ENCODE measurements at regions of chr19 and their contacts with region 1.

Region 1: DNA sequence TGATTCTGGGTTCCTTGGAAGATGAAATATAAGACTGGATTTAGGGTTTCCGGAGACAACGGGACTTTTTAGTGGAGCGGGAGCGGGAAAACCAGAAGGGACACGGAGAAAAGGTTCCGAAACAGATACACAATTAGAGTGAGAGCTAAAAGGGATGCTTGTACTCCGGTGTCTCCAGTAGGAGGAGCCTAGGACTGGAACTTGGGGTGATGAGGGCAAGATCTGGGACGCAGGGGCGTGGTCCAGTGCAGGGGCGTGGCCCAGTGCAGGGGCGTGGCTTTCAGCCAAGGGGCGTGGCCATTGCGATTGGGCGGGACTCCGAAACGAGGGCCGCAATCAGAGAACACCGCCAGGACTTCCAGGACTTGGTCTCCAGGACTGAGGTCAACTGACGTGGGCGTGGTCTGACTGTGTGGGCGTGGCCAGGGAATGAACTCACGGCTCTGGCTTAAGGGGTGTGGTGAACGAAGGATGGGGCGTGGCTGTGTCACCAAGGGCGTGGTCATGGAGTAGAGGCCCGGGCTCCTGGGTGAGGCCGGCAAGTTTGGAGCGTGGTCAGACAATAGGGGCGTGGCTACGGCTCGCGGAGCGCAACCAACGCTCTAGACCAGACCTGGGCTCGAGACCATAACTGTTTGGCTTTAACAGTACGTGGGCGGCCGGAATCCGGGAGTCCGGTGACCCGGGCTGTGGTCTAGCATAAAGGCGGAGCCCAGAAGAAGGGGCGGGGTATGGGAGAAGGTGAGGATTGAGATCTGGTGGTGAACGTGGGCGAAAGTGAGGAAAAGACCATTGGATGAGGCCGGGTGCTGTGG is at the start of gene DKKL1:
- DNase-seq: peak; percentile 98 to 99
- H3K4me3 ChIP-seq: peak within 1 kb of the TSS; percentile 45 to 76
- H3K27ac ChIP-seq: peak within 1 kb of the TSS; percentile 88 to 89
- H3K4me1 ChIP-seq: peaks cover 0 to 7% of the 10 kb centered on the region in 2 donors
- H3K27me3 ChIP-seq: no peaks in the 10 kb centered on the region
- CTCF ChIP-seq: no peak
- total RNA-seq, gene DKKL1: not detected

Region 2: GRCh38 chr19:49301165-49301865 is 62.2 kb before region 1 on chr19:
- intact Hi-C with region 1: no loop called
- DNase-seq: peak in 1 of 2 donors; percentile 78
- H3K4me3 ChIP-seq: no peak overlapping the region
- H3K27ac ChIP-seq: no peak overlapping the region
- H3K4me1 ChIP-seq: no peaks in the 10 kb centered on the region
- H3K27me3 ChIP-seq: no peaks in the 10 kb centered on the region
- CTCF ChIP-seq: peak in 2 of 3 experiments; percentile 62 to 66

Region 3: DNA sequence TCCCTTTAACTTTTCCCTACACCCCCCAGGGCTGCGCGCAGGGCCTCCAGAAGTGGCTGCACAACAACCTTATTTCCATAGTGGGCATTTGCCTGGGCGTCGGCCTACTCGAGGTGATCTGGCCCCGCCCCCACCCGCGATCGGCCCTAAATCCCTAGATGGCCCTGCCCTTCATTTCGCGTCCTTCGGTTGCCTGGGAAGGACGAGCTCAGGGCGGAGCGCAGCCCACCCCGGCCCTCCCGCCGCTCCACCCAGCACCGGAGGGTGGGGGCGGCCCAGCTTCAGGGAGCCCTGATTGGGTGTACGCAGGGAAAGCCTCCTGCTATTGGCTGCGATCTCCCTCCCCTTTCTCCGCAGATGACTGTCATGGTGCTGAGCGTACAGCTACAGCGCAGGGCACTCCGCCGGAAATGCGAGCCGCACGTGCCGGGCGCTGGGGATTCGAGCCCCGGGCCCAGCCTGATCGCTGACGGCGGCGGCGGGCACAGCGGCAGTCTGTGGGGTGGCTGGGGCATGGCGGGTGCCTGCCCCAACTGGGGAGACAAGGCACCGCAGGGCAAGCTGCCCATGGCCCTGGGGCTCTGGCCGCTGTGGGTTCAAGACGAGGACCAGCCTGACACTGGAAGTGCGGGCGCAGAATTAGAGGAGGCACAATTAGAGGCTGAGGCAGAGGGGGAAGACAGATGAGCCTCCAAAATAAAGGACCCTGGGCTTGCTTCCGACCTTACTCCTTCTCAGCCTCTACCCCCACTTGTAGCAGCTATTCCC is 24.0 kb before region 1 on chr19:
- intact Hi-C with region 1: loop called (anchors 1 kb)
- DNase-seq: peak; percentile 68 to 94
- H3K4me3 ChIP-seq: peak overlapping the region; percentile 44 to 67
- H3K27ac ChIP-seq: peak overlapping the region; percentile 85 to 86
- H3K4me1 ChIP-seq: peaks cover 6 to 14% of the 10 kb centered on the region in 2 donors
- H3K27me3 ChIP-seq: no peaks in the 10 kb centered on the region
- CTCF ChIP-seq: no peak

Measured in ascending aorta (tissue), 2 donors.